CD8-positive, alpha-beta T cell (primary cell): ENCODE measurements at regions of chr12 and their contacts with region 1.

Region 1: DNA sequence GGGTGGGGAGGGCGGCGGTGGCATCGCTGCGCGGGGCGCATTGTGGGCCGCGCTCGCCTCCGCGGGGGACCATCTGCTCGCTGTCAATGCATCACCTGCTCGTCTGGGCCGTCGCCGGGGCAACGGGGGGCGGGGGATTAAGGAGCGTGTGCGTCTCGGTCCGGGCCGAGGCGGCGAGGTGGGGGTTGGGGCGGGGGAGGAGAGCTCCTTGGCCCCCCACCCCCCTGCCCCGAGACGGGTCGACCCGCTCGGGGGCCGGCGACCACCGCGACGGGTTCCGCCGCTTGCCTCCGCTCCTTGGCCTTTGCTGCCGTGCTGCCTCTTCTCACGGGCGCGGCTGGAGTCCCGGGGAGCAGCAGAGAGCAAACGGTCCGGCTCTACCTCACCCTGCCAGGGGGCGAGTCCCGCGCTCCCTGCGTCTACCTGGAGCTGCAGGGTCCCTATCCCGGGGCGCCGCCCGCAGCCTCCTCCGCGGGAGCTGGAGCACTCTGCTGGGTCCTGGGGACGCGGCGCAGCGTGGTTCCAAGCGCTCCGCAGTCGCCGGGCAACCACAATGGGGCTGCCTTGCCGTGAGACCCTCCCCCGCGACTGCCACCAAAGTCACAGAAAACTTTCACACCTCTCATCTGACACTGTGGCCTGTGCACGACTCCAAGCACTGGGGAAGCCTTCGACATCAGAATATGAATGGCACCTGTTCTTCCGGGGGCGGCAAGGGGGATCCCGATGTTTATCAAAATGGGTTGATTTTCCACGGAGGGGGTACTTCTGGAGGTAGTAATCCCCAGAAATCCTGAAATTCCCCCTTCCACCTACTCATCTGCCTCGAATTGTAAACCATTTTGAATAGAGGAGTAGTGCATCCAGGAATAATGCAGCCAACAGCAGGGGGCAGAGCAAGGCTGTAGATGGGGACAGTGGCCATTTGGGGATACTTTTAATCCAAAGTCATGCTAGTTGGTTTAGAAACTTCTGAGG is at the start of gene C12orf42:
- DNase-seq: peak in 8 of 9 experiments; percentile 44 to 82 (median 74)
- ATAC-seq: peak; percentile 79
- H3K4me3 ChIP-seq: peak within 1 kb of the TSS; percentile 53 to 66
- H3K4me3 Mint-ChIP-seq: peak within 1 kb of the TSS; percentile 83
- H3K27ac ChIP-seq: peak within 1 kb of the TSS; percentile 39 to 46
- H3K27ac Mint-ChIP-seq: peak within 1 kb of the TSS; percentile 86
- H3K4me1 ChIP-seq: peaks cover 19% of the 10 kb centered on the region
- H3K4me1 Mint-ChIP-seq: peaks cover 19% of the 10 kb centered on the region
- H3K27me3 ChIP-seq: peaks cover 0 to 2% of the 10 kb centered on the region in 2 experiments
- H3K27me3 Mint-ChIP-seq: peaks cover 7% of the 10 kb centered on the region
- CTCF ChIP-seq: peak; percentile 29
- total RNA-seq, gene C12orf42: 5.5 to 8.8 TPM

Region 2: DNA sequence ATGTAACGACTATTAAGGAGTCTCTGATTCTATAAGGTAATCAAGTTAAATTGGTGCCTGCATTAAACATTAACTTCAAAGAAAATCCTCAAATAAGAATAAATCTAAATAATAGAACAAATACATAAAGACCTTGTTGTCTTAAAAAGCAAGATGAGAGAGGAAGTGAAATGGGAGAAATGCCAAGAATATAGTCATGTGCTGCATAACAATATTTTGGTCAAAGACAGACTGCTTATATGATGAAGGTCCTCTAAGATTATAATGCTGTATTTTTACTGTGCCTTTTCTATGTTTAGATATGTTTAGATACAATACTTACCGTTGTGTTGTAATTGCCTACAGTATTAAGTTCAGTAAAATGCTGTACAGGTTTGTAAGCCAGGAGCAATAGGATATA is 213.6 kb before region 1 on chr12:
- CTCF ChIA-PET with region 1: no interaction called
- POLR2A ChIA-PET with region 1: no interaction called
- intact Hi-C with region 1: loop called in 1 of 2 experiments (anchors 5 kb)
- DNase-seq: no peak
- ATAC-seq: no peak
- H3K4me3 ChIP-seq: no peak overlapping the region
- H3K4me3 Mint-ChIP-seq: no peak overlapping the region
- H3K27ac ChIP-seq: no peak overlapping the region
- H3K27ac Mint-ChIP-seq: no peak overlapping the region
- H3K4me1 ChIP-seq: peaks cover 3% of the 10 kb centered on the region
- H3K4me1 Mint-ChIP-seq: peaks cover 12% of the 10 kb centered on the region
- H3K27me3 ChIP-seq: no peaks in the 10 kb centered on the region
- H3K27me3 Mint-ChIP-seq: no peaks in the 10 kb centered on the region
- CTCF ChIP-seq: no peak

Region 3: GRCh38 chr12:103441437-103442181 is 54.2 kb before region 1 on chr12:
- CTCF ChIA-PET with region 1: no interaction called
- POLR2A ChIA-PET with region 1: interaction called, 9 read pairs
- intact Hi-C with region 1: loop called in 1 of 2 experiments (anchors 1 kb)
- DNase-seq: peak; percentile 7 to 77 (median 38)
- ATAC-seq: peak; percentile 93
- H3K4me3 ChIP-seq: peak overlapping the region; percentile 19 to 45
- H3K4me3 Mint-ChIP-seq: peak overlapping the region; percentile 91
- H3K27ac ChIP-seq: peak overlapping the region; percentile 45 to 85
- H3K27ac Mint-ChIP-seq: peak overlapping the region; percentile 98
- H3K4me1 ChIP-seq: peaks cover 19% of the 10 kb centered on the region
- H3K4me1 Mint-ChIP-seq: peaks cover 25% of the 10 kb centered on the region
- H3K27me3 ChIP-seq: no peaks in the 10 kb centered on the region
- H3K27me3 Mint-ChIP-seq: no peaks in the 10 kb centered on the region
- CTCF ChIP-seq: no peak